Posterior vena cava (tissue), 2 donors: ENCODE measurements at regions of chr5 and their contacts with region 1.

Region 1: DNA sequence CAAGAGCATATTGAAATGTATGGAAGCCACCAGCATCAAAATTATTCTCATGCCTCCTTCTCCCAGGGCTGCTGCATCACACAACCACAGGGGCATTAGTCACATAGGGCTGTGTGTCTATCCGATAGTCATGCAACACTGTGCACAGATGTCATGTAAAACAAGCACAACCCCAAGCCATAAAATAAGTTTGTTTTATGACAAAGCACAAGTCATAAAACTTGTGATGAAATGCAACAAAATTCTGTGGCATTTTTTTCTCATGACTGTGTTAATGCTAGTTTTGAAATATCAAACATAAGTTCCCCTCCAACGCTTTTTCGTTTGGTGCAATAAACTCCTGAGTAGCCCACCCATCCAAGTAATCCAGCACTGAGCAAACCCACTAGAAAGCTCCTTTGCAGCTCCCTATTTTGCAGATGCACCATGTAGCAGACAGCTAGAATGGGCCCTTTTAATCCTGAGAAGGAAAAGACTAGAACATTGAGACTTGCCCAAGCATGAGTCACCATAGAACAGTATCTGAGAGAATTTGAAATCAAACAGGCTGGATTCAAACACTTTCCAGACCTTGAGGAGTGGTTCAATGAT is 93.3 kb upstream of the ZNF366 start:
- DNase-seq: no peak

Region 2: GRCh38 chr5:72543365-72543764 is 57.1 kb before region 1 on chr5:
- intact Hi-C with region 1: no loop called
- DNase-seq: no peak

Region 3: GRCh38 chr5:72561148-72561972 is 39.1 kb before region 1 on chr5:
- intact Hi-C with region 1: no loop called
- DNase-seq: no peak

Region 4: DNA sequence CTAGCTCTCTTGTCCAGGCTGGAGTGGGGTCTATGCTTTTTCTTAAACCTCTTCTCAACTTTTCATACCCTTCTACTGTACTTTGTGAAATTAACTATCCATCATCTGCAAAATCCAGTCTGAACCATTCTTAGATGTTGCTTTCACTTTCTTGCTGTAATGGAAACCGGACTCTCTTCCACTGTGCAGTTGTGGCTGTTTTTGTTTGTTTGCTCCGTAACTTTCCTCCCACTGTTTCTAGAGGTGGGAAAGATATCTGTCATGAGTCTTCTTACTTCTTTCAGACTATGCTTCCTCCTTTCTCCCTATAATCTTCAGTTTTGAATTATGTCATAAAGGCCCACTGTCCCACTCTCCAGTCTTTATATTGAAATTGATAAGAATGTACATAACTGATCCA is 222.5 kb after region 1 on chr5:
- intact Hi-C with region 1: loop called in 1 of 2 experiments (anchors 10 kb)
- DNase-seq: no peak

Region 5: DNA sequence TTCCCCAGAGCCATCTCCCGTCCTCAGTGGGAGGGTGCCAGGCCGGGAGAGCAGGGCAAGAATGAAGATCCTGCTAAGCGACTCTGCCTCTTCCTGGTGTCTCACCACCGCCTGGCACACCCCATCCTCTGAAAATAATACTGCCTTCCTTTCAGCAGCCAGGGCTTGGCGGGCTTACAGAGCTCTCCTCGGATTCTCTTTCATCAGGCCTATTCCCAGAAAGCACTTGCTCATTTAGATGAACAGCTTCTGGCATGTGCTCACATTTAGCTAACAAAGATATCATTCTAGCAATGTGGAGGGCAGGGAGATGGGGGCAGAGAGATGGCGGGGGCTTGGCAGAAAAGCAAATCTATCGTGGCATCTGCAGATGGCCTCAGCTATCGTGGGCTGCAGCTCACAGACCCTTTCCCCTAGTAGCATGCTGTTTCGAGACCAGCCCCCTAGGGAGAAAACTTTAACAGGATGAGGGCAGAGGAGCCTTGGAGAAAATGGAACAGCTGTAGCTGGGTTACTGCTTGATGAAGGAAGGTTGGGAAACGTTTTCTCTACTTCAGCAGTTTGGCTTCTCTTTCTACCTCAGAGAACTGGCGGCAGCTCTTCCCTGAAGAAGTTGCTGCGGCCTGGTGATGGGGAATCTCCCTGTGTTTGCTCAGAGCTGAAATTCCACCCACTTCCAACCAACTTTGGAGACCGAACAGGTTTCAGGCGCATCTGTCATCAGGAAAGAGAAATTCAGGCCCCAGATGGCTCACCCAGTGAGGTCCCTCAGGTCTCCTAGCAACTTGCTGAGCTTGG is 674.6 kb after region 1 on chr5:
- intact Hi-C with region 1: no loop called
- DNase-seq: peak; percentile 85